ENCODE measurements at regions of chr18 and their contacts with region 1.

Region 1: GRCh38 chr18:67217551-67218166 is 298.9 kb downstream of the DSEL start:
- DNase-seq: peak; percentile 29
- H3K4me3 ChIP-seq: no peak overlapping the region
- H3K27ac ChIP-seq: no peak overlapping the region
- H3K4me1 ChIP-seq: no peaks in the 10 kb centered on the region
- H3K27me3 ChIP-seq: no peaks in the 10 kb centered on the region
- CTCF ChIP-seq: peak; percentile 71 to 84 (median 74)
- EP300 ChIP-seq: no peak
- POLR2A ChIP-seq: no peak

Region 2: DNA sequence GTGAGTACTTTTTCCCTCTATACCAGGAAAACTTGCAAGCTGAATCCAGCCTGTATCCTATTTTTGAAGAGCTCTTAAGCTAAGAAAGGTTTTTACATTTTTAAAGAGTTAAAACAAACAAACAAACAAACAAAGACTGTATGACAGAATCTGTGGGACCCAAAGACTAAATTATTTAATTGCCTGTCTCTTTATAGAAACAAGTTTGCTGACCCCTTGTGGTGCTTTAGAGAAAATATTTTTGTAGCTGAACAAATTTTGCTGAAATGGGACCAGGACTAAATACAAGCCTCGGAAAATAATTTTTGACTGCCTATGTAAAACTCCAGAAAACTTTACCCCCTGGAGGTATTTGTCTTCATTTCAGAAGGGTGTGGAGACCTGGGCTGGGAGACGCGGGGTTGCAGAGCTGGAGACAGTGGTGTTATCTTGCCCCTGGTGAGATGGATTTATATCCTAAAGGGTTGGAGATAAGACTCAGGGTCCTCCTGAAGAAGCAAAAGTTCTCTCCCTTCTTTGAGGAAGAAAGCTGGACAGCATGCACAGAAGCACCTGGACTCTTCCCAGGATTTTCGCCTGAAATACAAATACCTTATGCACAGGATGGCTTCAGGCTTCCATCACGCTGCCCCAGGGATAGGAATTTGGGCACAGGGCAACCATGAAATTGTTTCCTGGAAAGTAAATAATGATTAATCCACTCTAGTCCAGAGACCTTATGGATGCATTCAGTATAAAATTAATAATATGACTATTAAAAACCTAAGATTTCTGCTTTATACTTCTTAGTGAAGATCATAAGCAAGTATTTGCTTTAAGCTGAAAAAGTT is 1442.9 kb after region 1 on chr18:
- in situ Hi-C with region 1: loop called in 3 of 4 experiments (anchors 10 to 25 kb)
- intact Hi-C with region 1: loop called (anchors 10 kb)
- DNase-seq: no peak
- H3K4me3 ChIP-seq: no peak overlapping the region
- H3K27ac ChIP-seq: no peak overlapping the region
- H3K4me1 ChIP-seq: no peaks in the 10 kb centered on the region
- H3K27me3 ChIP-seq: no peaks in the 10 kb centered on the region
- CTCF ChIP-seq: peak; percentile 46 to 53 (median 47)
- EP300 ChIP-seq: no peak
- POLR2A ChIP-seq: no peak